CD8-positive, alpha-beta T cell (primary cell): ENCODE measurements at regions of chr19 and their contacts with region 1.

Region 1: DNA sequence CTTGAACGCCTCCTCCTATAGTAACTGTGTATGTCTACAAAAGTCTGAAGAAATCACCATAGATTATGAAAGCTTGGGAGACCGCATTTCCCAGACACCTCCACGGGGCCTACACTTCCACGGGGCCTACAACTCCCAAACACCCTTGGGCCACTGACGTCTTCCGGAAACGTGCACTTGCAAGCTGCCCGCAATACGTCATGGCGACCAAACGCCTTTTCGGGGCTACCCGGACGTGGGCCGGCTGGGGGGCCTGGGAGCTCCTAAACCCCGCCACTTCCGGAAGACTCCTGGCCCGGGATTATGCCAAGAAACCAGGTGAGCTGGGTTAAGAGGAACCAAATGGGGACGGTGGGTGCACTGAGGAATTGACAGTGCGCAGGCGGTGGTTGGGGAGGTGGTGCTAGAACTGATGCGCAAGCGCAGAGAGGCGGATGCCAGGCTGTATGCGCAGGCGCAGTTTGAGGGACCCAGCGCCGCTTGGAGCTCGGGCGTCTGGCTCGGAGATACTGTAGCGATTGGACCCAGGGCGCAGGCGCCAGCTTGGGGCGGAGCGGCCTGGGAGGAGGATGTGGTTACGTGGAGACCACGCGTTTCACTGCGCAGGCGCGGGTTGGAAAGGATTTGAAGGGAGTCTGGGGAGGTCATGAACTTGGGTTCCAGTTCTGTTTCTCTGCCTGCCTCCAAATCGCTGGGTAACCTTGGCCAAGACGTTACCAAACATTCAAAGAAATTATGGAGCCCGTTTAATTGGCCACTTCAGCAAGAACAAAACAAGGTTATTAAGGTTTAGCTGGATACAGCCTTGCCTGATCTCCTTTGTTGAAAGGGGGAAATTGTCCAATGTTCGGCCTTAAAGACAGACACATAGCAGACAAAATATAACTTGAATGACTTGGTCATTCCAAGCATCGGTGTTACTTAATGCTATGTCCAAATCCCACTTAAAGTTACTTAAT is at the start of gene MRPL54:
- DNase-seq: peak; percentile 98 to 100 (median 99)
- ATAC-seq: peak; percentile 79
- H3K4me3 ChIP-seq: peak within 1 kb of the TSS; percentile 80 to 90
- H3K4me3 Mint-ChIP-seq: peak within 1 kb of the TSS; percentile 95
- H3K27ac ChIP-seq: peak within 1 kb of the TSS; percentile 98 to 99
- H3K27ac Mint-ChIP-seq: peak within 1 kb of the TSS; percentile 100
- H3K4me1 ChIP-seq: peaks cover 46% of the 10 kb centered on the region
- H3K4me1 Mint-ChIP-seq: peaks cover 47% of the 10 kb centered on the region
- H3K27me3 ChIP-seq: no peaks in the 10 kb centered on the region
- H3K27me3 Mint-ChIP-seq: no peaks in the 10 kb centered on the region
- CTCF ChIP-seq: no peak
- total RNA-seq, gene MRPL54: 72.5 to 78.0 TPM

Region 2: GRCh38 chr19:3035542-3036118 is 727.1 kb before region 1 on chr19:
- CTCF ChIA-PET with region 1: no interaction called
- POLR2A ChIA-PET with region 1: no interaction called
- intact Hi-C with region 1: loop called in 1 of 2 experiments (anchors 10 kb)
- DNase-seq: peak; percentile 89 to 99 (median 94)
- ATAC-seq: peak; percentile 87
- H3K4me3 ChIP-seq: peak overlapping the region; percentile 63 to 80
- H3K4me3 Mint-ChIP-seq: peak overlapping the region; percentile 93
- H3K27ac ChIP-seq: peak overlapping the region; percentile 47 to 79
- H3K27ac Mint-ChIP-seq: peak overlapping the region; percentile 96
- H3K4me1 ChIP-seq: peaks cover 18% of the 10 kb centered on the region
- H3K4me1 Mint-ChIP-seq: peaks cover 19% of the 10 kb centered on the region
- H3K27me3 ChIP-seq: no peaks in the 10 kb centered on the region
- H3K27me3 Mint-ChIP-seq: no peaks in the 10 kb centered on the region
- CTCF ChIP-seq: no peak

Region 3: GRCh38 chr19:3632739-3633558 is 129.8 kb before region 1 on chr19:
- CTCF ChIA-PET with region 1: no interaction called
- POLR2A ChIA-PET with region 1: no interaction called
- intact Hi-C with region 1: no loop called
- DNase-seq: no peak
- ATAC-seq: no peak
- H3K4me3 ChIP-seq: no peak overlapping the region
- H3K4me3 Mint-ChIP-seq: no peak overlapping the region
- H3K27ac ChIP-seq: no peak overlapping the region
- H3K27ac Mint-ChIP-seq: no peak overlapping the region
- H3K4me1 ChIP-seq: no peaks in the 10 kb centered on the region
- H3K4me1 Mint-ChIP-seq: no peaks in the 10 kb centered on the region
- H3K27me3 ChIP-seq: no peaks in the 10 kb centered on the region
- H3K27me3 Mint-ChIP-seq: no peaks in the 10 kb centered on the region
- CTCF ChIP-seq: no peak

Region 4: DNA sequence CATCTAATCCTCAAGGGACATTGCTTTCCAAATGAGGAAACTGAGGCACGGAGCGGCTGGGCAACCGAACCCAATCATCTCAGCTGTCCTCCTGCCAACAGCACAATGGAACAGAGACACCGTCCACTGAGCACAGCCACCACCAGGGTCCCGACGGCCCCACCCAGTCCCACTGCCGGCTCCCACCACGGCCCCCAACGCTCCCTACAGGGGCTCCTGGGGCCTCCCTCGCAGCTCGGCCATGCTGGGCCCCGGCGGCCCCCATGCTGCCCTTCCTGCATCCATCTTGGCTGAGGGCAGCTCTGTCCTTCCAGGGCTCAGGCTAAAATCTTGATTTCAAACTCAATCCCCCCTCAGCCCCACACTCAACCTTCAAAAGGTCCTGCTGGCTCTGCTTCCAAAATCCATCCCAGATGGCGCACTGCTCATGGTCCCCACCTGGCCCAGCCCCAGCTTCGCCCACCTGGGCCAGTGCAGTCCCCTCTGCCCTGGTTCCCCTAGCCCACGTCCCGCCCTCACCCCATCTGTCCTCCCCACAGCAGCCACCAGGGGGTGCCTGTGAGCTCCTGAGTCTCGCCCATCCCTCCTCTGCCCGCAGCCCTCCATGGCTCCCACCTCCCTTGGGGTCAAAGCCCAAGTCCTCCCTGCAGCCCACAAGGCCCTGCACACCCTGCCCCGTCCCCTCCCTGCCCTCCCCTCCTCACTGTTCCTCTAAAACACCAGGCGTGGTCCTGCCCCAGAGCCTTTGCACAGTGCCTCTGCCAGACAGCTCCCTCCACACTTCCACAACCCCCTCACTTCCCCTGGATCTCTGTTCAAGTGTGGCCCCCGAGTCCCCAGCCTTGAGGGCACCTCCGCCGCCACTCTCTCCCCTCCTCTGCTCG is 70.4 kb before region 1 on chr19:
- CTCF ChIA-PET with region 1: no interaction called
- POLR2A ChIA-PET with region 1: interaction called, 13 read pairs
- intact Hi-C with region 1: no loop called
- DNase-seq: peak; percentile 24 to 71 (median 58)
- ATAC-seq: peak; percentile 78
- H3K4me3 ChIP-seq: no peak overlapping the region
- H3K4me3 Mint-ChIP-seq: no peak overlapping the region
- H3K27ac ChIP-seq: no peak overlapping the region
- H3K27ac Mint-ChIP-seq: no peak overlapping the region
- H3K4me1 ChIP-seq: peaks cover 20% of the 10 kb centered on the region
- H3K4me1 Mint-ChIP-seq: peaks cover 25% of the 10 kb centered on the region
- H3K27me3 ChIP-seq: no peaks in the 10 kb centered on the region
- H3K27me3 Mint-ChIP-seq: no peaks in the 10 kb centered on the region
- CTCF ChIP-seq: peak; percentile 55

Region 5: DNA sequence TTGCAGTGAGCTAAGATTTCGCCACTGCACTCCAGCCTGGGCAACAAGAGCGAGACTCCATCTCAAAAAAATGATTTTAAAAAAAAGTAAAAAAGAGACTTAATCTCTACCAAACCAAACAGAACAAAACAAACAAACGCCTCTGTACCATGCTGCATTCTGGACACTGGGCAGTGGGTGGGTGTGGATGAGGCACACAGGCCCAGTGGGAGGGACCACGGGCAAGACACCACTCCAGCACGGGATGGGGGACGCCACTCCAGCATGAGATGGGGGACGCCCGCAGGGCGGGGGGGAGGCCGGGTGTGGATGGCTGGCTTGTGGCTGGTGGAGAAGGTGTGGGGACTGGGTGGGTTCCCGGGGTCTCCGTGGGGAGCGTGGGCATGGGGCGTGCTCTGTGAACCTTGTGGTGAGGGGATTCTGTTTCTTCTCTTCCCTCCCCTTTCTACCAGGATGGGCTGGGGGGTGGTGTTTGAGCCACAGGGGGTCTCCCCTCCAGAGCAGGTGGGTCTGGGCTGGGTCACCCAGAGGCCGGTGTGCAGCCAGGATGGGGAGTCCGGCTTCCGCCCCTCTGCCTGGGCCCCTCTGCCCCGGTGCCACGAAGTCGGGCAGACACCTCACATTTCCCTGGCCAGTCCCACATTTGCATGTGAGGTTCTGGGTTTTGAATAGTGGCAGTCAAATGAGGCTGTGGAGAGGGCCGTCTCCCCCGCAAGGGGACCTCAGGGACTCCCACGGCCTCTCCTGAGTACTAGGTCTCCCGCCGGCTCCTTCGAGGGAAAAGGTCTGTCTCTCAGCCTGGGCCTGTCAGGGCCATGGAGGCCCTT is 47.3 kb after region 1 on chr19:
- CTCF ChIA-PET with region 1: interaction called, 8 read pairs
- POLR2A ChIA-PET with region 1: interaction called, 20 read pairs
- intact Hi-C with region 1: loop called (anchors 1 to 2 kb)
- DNase-seq: peak in 1 of 9 experiments; percentile 19
- ATAC-seq: no peak
- H3K4me3 ChIP-seq: no peak overlapping the region
- H3K4me3 Mint-ChIP-seq: no peak overlapping the region
- H3K27ac ChIP-seq: peak overlapping the region in 1 of 2 experiments; percentile 25
- H3K27ac Mint-ChIP-seq: no peak overlapping the region
- H3K4me1 ChIP-seq: peaks cover 48% of the 10 kb centered on the region
- H3K4me1 Mint-ChIP-seq: peaks cover 57% of the 10 kb centered on the region
- H3K27me3 ChIP-seq: no peaks in the 10 kb centered on the region
- H3K27me3 Mint-ChIP-seq: no peaks in the 10 kb centered on the region
- CTCF ChIP-seq: no peak

Region 6: GRCh38 chr19:4123615-4124568 is 361.1 kb after region 1 on chr19 and contains the start of gene MAP2K2:
- CTCF ChIA-PET with region 1: no interaction called
- POLR2A ChIA-PET with region 1: no interaction called
- intact Hi-C with region 1: loop called in 1 of 2 experiments (anchors 5 kb)
- DNase-seq: peak; percentile 91 to 98 (median 97)
- ATAC-seq: peak; percentile 96
- H3K4me3 ChIP-seq: peak within 1 kb of the TSS; percentile 57 to 72
- H3K4me3 Mint-ChIP-seq: peak within 1 kb of the TSS; percentile 93
- H3K27ac ChIP-seq: peak within 1 kb of the TSS; percentile 52 to 73
- H3K27ac Mint-ChIP-seq: peak within 1 kb of the TSS; percentile 91
- H3K4me1 ChIP-seq: peaks cover 17% of the 10 kb centered on the region
- H3K4me1 Mint-ChIP-seq: peaks cover 25% of the 10 kb centered on the region
- H3K27me3 ChIP-seq: no peaks in the 10 kb centered on the region
- H3K27me3 Mint-ChIP-seq: no peaks in the 10 kb centered on the region
- CTCF ChIP-seq: no peak
- total RNA-seq, gene MAP2K2: 73.9 to 76.8 TPM

Region 7: GRCh38 chr19:4471403-4472173 is 708.8 kb after region 1 on chr19:
- CTCF ChIA-PET with region 1: no interaction called
- POLR2A ChIA-PET with region 1: no interaction called
- intact Hi-C with region 1: loop called in 1 of 2 experiments (anchors 5 kb)
- DNase-seq: peak; percentile 94 to 100 (median 97)
- ATAC-seq: peak; percentile 85
- H3K4me3 ChIP-seq: peak overlapping the region; percentile 55 to 63
- H3K4me3 Mint-ChIP-seq: no peak overlapping the region
- H3K27ac ChIP-seq: peak overlapping the region; percentile 70 to 72
- H3K27ac Mint-ChIP-seq: no peak overlapping the region
- H3K4me1 ChIP-seq: peaks cover 20% of the 10 kb centered on the region
- H3K4me1 Mint-ChIP-seq: peaks cover 22% of the 10 kb centered on the region
- H3K27me3 ChIP-seq: no peaks in the 10 kb centered on the region
- H3K27me3 Mint-ChIP-seq: no peaks in the 10 kb centered on the region
- CTCF ChIP-seq: no peak